Colonic mucosa (tissue), 4 donors: ENCODE measurements at regions of chr1 and their contacts with region 1.

Region 1: DNA sequence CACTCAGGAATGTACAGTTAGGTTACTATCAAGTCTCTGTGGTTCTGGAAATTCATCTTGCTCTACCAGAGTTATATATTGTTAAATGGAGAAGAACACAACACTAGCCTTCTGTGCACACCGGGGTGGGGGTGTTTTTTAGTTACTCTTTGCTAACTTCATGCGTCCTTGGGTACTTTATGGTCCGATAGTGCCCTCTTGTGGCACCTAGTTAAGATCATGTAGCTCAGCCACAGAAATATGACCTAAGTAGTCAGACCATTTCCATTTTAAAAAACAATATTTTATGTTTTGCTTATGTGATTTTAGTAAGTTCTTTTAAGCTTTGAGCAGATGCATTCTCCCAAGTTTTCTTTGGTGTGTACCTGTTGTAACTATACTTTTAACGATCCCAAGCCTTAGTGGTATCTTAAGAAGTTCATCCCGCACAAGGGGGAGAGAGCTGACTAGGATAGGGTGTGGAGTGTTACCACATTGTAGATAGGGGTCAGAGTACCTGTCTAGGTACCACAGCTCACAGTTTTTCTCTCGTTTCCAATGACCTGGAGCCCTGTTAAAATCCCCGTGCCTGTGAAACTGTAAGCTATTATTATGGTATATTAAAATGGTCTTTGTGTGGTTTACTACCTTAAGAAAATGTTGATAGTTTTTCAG is 20.6 kb upstream of the SH3D21 start:
- DNase-seq: peak; percentile 72
- H3K4me3 ChIP-seq: no peak overlapping the region
- H3K27ac ChIP-seq: no peak overlapping the region
- H3K4me1 ChIP-seq: no peaks in the 10 kb centered on the region
- H3K27me3 ChIP-seq: no peaks in the 10 kb centered on the region
- CTCF ChIP-seq: peak; percentile 65

Region 2: GRCh38 chr1:36088575-36089443 is 196.8 kb before region 1 on chr1 and contains the start of gene ADPRS:
- intact Hi-C with region 1: loop called (anchors 5 kb)
- DNase-seq: peak; percentile 87
- H3K4me3 ChIP-seq: peak within 1 kb of the TSS; percentile 96
- H3K27ac ChIP-seq: peak within 1 kb of the TSS; percentile 83
- H3K4me1 ChIP-seq: no peaks in the 10 kb centered on the region
- H3K27me3 ChIP-seq: no peaks in the 10 kb centered on the region
- CTCF ChIP-seq: peak; percentile 97
- total RNA-seq, gene ADPRS: 30.4 to 33.0 TPM

Region 3: GRCh38 chr1:36150296-36151132 is 135.1 kb before region 1 on chr1:
- intact Hi-C with region 1: loop called (anchors 10 kb)
- DNase-seq: peak; percentile 93
- H3K4me3 ChIP-seq: peak overlapping the region; percentile 1
- H3K27ac ChIP-seq: peak overlapping the region; percentile 94
- H3K4me1 ChIP-seq: peaks cover 16% of the 10 kb centered on the region
- H3K27me3 ChIP-seq: no peaks in the 10 kb centered on the region
- CTCF ChIP-seq: no peak

Region 4: DNA sequence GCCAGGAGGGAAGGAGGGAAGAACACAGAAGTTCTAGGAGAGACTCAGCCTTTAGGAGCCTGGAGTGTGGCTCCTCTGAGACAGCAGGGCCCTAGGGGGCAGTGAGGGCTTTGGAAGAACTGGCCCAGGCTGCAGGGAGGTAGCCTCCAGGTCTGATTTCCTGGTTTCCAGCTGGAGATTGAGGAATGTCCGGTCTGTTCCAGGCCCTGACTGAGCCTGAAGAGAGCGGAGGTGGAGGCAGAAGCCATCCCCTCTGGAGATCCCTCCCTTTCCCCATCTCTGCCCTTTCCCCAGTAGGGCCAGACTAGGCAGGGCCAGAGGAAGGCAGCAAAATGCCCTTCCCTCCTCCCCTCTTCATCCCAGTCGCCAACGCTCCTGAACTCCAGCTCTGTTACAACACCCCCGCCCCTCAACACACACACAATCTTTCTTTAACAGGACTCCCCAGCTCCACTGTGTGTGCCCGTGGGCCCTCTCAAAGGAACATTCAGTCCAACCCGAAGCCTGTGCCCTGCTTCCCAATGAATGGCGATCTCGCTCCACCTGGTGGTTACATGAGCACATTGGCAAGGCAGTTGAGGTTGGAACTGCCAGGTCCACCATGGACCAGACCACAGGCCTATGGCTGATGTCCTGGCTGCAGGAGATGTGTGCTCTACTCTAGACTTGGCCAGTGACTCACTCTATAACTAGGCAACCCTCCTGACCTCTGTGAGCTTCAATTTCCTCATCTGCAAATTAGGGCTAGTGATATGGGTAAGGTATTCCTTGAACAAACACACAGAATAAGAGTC is 97.6 kb before region 1 on chr1:
- intact Hi-C with region 1: loop called (anchors 10 kb)
- DNase-seq: peak; percentile 87
- H3K4me3 ChIP-seq: no peak overlapping the region
- H3K27ac ChIP-seq: peak overlapping the region; percentile 67
- H3K4me1 ChIP-seq: peaks cover 6% of the 10 kb centered on the region
- H3K27me3 ChIP-seq: no peaks in the 10 kb centered on the region
- CTCF ChIP-seq: peak; percentile 81